Panc1 (cell line): ENCODE measurements at regions of chr3 and their contacts with region 1.

Region 1: DNA sequence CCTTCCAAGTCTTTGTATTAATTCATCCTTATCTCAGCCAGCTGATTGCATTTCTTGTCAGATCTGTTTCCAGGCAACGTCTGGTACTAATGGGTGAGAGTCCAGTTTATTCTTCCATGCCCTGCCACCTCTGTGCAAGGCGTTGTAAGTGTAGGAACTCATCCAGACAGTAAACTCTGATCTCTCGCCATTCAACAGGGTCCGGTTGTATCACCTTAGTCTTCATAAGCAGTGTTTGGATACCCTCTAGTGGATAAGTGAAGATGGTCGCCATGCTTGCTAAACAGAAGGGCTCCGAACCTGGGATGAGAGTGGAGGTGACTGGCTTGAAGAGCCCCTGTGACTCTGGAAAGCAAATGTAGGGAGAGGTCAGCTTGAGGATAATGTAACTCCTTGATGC is 51.6 kb upstream of the CMTM7 start:
- DNase-seq: peak; percentile 17
- ATAC-seq: peak; percentile 88
- H3K4me3 ChIP-seq: no peak overlapping the region
- H3K27ac ChIP-seq: no peak overlapping the region
- H3K4me1 ChIP-seq: no peaks in the 10 kb centered on the region
- H3K27me3 ChIP-seq: no peaks in the 10 kb centered on the region
- CTCF ChIP-seq: peak; percentile 60

Region 2: GRCh38 chr3:31724661-31725060 is 615.4 kb before region 1 on chr3:
- CTCF ChIA-PET with region 1: no interaction called
- POLR2A ChIA-PET with region 1: no interaction called
- in situ Hi-C with region 1: no loop called
- intact Hi-C with region 1: no loop called
- DNase-seq: no peak
- ATAC-seq: no peak
- H3K4me3 ChIP-seq: no peak overlapping the region
- H3K27ac ChIP-seq: no peak overlapping the region
- H3K4me1 ChIP-seq: no peaks in the 10 kb centered on the region
- H3K27me3 ChIP-seq: no peaks in the 10 kb centered on the region
- CTCF ChIP-seq: peak; percentile 34

Region 3: DNA sequence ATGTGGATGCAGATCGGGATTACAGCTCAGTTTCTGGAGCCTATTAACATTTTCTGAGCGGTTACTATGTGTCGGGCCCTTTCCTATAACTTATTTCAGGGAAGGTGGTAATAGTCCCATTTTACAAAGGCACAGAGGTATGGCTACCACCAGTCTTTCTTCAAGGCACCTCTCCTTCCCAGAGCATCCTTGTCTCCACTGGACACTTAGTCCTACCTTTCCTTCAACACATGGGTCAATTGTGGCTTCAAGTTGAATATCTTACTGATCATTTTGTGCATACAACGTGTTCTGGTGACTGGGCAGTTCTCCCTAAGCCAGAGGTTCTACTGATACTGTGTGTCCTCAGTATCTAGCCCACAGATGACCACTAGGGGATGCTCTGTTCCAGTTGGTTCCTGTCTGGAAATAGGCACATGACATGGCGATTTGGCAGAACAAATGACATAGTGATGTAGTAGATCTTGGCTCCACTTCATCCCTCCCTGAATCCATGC is 162.3 kb before region 1 on chr3:
- CTCF ChIA-PET with region 1: no interaction called
- POLR2A ChIA-PET with region 1: no interaction called
- in situ Hi-C with region 1: no loop called
- intact Hi-C with region 1: loop called (anchors 5 kb)
- DNase-seq: peak; percentile 80
- ATAC-seq: peak; percentile 96
- H3K4me3 ChIP-seq: peak overlapping the region in 1 of 2 experiments; percentile 30; a peak in 2 of 4 replicates
- H3K27ac ChIP-seq: no peak overlapping the region
- H3K4me1 ChIP-seq: peaks cover 5% of the 10 kb centered on the region
- H3K27me3 ChIP-seq: no peaks in the 10 kb centered on the region
- CTCF ChIP-seq: peak; percentile 85